ENCODE measurements at regions of chr13 and their contacts with region 1.

Region 1: DNA sequence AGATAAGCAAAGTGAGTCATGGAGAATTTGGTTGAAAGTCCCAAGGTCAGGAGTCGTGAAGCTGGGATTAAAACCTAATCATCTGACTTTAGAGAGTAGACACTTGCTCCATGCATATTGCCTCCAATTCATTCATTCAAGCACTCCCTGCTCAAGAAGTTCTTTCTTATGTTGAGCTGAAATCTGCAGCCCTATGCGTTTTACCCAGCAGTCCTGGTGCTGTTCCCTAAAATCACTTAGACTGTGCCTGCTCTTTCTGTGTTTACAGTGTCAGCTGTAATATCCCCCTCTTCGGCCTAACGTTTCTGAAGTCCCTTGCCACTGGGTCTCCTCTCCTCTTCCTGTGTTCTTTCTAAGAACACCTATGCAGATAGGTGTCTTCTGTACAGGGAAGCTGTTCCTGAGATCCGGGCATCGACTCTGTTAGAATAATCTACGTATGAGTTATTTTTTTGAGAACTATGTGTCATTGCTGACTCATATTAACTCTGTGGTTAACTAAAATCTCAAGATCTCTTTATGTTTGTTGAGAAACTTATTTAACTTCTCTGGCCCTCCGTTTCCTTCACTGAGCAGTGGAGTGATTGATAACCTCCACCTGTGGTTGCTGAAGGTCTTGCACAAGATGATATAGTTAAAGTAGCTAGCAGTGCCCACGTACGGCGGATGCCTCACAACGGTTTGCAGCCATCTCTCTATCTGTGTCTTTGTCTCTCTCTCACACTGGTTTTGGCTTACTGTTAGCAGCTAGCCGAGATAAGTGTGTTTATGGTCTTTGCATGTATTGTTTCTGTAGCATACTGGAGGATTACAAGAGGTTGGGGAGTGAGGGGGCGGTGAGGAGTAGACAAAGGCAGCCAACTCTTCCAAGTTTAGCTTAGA is 4.7 kb downstream of the ALOX5AP start:
- DNase-seq: peak; percentile 68
- H3K4me3 Mint-ChIP-seq: peak overlapping the region; percentile 83
- H3K27ac Mint-ChIP-seq: peak overlapping the region; percentile 95
- H3K4me1 Mint-ChIP-seq: peaks cover 81% of the 10 kb centered on the region
- H3K27me3 Mint-ChIP-seq: peaks cover 2% of the 10 kb centered on the region

Region 2: DNA sequence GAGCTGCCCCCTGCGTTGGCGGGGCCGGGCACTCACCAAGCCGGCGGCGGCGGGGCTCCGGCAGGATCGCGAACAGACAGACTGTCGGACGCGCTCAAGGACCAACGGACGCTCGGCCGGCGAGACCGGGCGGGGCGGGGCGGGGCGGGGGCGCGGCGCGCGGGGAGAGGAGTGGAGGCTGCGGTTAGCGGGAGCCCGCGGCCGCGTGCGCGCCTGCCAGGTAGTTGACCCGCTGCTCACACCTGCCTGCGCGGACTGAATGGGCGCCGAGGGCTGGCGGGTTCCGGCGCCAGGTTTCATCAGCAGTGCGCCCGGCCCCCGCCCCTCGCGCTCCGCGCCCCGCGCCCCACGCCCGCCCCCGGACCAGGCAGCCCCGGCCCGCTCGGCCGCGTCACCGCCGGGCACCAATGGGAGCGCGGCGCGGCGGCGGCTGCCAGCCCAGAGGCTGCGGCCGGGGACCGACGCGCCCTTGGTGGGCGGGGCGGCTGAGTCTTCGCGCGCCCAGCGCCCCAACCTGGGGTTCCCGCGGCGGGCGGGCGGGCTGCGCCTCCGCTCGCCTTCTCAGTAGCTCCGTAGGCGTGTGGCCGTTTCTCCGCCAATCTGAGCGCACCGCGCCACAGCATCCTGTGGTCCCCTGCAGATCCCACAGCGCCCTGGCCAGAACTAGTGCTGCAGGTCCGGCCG is 1144.5 kb before region 1 on chr13 and contains the start of gene SLC7A1:
- intact Hi-C with region 1: loop called (anchors 5 kb)
- DNase-seq: peak; percentile 88
- H3K4me3 Mint-ChIP-seq: peak within 1 kb of the TSS; percentile 95
- H3K27ac Mint-ChIP-seq: peak within 1 kb of the TSS; percentile 95
- H3K4me1 Mint-ChIP-seq: peaks cover 51% of the 10 kb centered on the region
- H3K27me3 Mint-ChIP-seq: peaks cover 6% of the 10 kb centered on the region
- total RNA-seq, gene SLC7A1: 128 and 138 TPM in 2 replicates

Region 3: GRCh38 chr13:30306762-30307193 is 433.2 kb before region 1 on chr13:
- intact Hi-C with region 1: loop called (anchors 2 kb)
- DNase-seq: peak; percentile 90
- H3K4me3 Mint-ChIP-seq: peak overlapping the region; percentile 88
- H3K27ac Mint-ChIP-seq: peak overlapping the region; percentile 84
- H3K4me1 Mint-ChIP-seq: peaks cover 65% of the 10 kb centered on the region
- H3K27me3 Mint-ChIP-seq: no peaks in the 10 kb centered on the region

Region 4: GRCh38 chr13:30453727-30454126 is 286.3 kb before region 1 on chr13:
- intact Hi-C with region 1: no loop called
- DNase-seq: no peak
- H3K4me3 Mint-ChIP-seq: no peak overlapping the region
- H3K27ac Mint-ChIP-seq: no peak overlapping the region
- H3K4me1 Mint-ChIP-seq: peaks cover 10% of the 10 kb centered on the region
- H3K27me3 Mint-ChIP-seq: peaks cover 3% of the 10 kb centered on the region

Region 5: DNA sequence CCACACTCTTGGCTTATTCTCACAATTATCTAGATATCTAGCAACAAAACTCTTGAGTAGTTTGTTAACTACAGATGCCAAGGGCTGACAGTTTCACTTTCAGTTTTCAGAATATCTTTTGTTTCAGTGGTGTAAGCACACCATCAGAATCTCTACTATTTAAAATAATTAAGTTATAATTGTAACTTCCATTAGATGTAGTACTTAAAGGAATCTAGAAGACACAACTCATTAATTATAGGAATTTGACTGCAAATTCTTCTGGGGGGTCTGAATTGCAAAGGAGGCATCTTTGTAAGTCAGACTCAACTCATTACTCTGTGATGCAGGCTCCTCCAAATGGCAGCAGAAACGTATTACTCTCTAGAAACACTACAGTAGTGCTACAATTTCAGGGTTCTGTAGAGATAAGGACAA is 167.1 kb before region 1 on chr13:
- intact Hi-C with region 1: loop called (anchors 5 kb)
- DNase-seq: no peak
- H3K4me3 Mint-ChIP-seq: peak overlapping the region; percentile 59
- H3K27ac Mint-ChIP-seq: no peak overlapping the region
- H3K4me1 Mint-ChIP-seq: peaks cover 44% of the 10 kb centered on the region
- H3K27me3 Mint-ChIP-seq: peaks cover 9% of the 10 kb centered on the region

Region 6: DNA sequence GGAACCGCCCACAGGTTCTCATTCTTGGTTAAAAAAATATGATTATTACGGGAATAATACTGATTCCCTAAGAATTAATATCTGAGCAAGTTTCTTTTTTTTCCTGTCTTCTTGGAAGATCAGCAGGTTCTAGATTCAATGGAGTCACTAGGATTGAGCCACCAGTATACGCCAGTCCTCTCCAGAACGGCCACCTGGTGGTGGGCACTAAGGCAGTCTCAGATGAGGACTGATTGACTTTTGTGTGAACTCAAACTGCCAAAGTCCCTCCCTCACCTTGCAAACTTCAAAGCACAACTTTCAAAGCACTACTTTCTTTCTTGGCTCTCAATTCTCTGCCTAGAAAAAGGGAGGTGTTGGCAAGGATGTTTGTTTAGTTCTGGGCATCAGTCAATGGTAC is 38.0 kb before region 1 on chr13:
- intact Hi-C with region 1: loop called (anchors 5 kb)
- DNase-seq: no peak
- H3K4me3 Mint-ChIP-seq: no peak overlapping the region
- H3K27ac Mint-ChIP-seq: no peak overlapping the region
- H3K4me1 Mint-ChIP-seq: peaks cover 27% of the 10 kb centered on the region
- H3K27me3 Mint-ChIP-seq: peaks cover 25% of the 10 kb centered on the region

Region 7: GRCh38 chr13:30780338-30780981 is 40.5 kb after region 1 on chr13:
- intact Hi-C with region 1: no loop called
- DNase-seq: no peak
- H3K4me3 Mint-ChIP-seq: no peak overlapping the region
- H3K27ac Mint-ChIP-seq: no peak overlapping the region
- H3K4me1 Mint-ChIP-seq: peaks cover 6% of the 10 kb centered on the region
- H3K27me3 Mint-ChIP-seq: peaks cover 5% of the 10 kb centered on the region

Region 8: GRCh38 chr13:30796631-30797601 is 56.9 kb after region 1 on chr13:
- intact Hi-C with region 1: loop called (anchors 1 kb)
- DNase-seq: no peak
- H3K4me3 Mint-ChIP-seq: peak overlapping the region; percentile 59
- H3K27ac Mint-ChIP-seq: peak overlapping the region; percentile 81
- H3K4me1 Mint-ChIP-seq: peaks cover 44% of the 10 kb centered on the region
- H3K27me3 Mint-ChIP-seq: peaks cover 3% of the 10 kb centered on the region

Measured in activated T-helper 1 cell treated with anti-CD3 and anti-CD28 coated beads, Interleukin-12 subunit alpha, Interleukin-12 subunit beta, Interleukin-2, Interleukin-4 antibody, amounts not matched to agents 30 ng/mL and 10 ng/mL and 1 ng/mL, durations not matched to agents 14 hours and 24 hours and 36 hours (primary cell).